WTC11 (cell line): ENCODE measurements at regions of chr21 and their contacts with region 1.

Region 1: GRCh38 chr21:32940079-32941014 is 85.4 kb upstream of the OLIG2 start:
- DNase-seq: peak; percentile 41
- ATAC-seq: peak; percentile 93
- H3K4me3 Mint-ChIP-seq: no peak overlapping the region
- H3K27ac Mint-ChIP-seq: no peak overlapping the region
- H3K4me1 Mint-ChIP-seq: peaks cover 7% of the 10 kb centered on the region
- H3K27me3 Mint-ChIP-seq: peaks cover 4% of the 10 kb centered on the region
- CTCF ChIP-seq: peak; percentile 72

Region 2: GRCh38 chr21:32921632-32922230 is 18.6 kb before region 1 on chr21:
- CTCF ChIA-PET with region 1: interaction called, 15 read pairs
- POLR2A ChIA-PET with region 1: no interaction called
- DNase-seq: peak; percentile 72
- ATAC-seq: peak; percentile 68
- H3K4me3 Mint-ChIP-seq: no peak overlapping the region
- H3K27ac Mint-ChIP-seq: no peak overlapping the region
- H3K4me1 Mint-ChIP-seq: peaks cover 18% of the 10 kb centered on the region
- H3K27me3 Mint-ChIP-seq: peaks cover 3% of the 10 kb centered on the region; the same call in 1 of the 2 replicates
- CTCF ChIP-seq: peak; percentile 46; the same call in 1 of the 2 replicates

Region 3: GRCh38 chr21:32958288-32959002 is 18.1 kb after region 1 on chr21:
- CTCF ChIA-PET with region 1: interaction called, 13 read pairs
- POLR2A ChIA-PET with region 1: no interaction called
- DNase-seq: no peak
- ATAC-seq: peak; percentile 68
- H3K4me3 Mint-ChIP-seq: no peak overlapping the region
- H3K27ac Mint-ChIP-seq: peak overlapping the region; percentile 69; the same call in 1 of the 2 replicates
- H3K4me1 Mint-ChIP-seq: peaks cover 58% of the 10 kb centered on the region
- H3K27me3 Mint-ChIP-seq: no peaks in the 10 kb centered on the region; the same call in none of the 2 replicates
- CTCF ChIP-seq: no peak

Region 4: DNA sequence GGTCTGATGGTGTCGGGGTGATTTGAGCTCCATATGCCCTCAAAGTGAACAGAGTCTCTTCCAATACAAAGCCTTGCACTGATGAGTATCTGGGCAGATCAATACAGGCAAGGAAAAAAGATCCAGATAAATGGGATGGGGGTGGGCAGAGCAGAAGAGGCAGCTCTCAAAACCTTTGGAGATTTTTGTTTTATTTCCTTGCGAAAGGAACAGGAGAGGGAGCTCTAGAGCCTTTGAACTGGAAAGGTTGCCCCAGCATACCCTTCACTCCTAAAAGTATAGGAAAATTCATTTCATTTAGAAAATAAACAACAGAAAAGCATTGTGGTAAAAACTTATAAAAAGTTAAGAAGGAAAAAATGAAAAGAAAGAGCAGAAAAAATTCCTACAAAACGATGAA is 54.0 kb after region 1 on chr21:
- CTCF ChIA-PET with region 1: interaction called, 22 read pairs
- POLR2A ChIA-PET with region 1: no interaction called
- DNase-seq: no peak
- ATAC-seq: peak; percentile 56
- H3K4me3 Mint-ChIP-seq: no peak overlapping the region
- H3K27ac Mint-ChIP-seq: no peak overlapping the region
- H3K4me1 Mint-ChIP-seq: peaks cover 8% of the 10 kb centered on the region
- H3K27me3 Mint-ChIP-seq: no peaks in the 10 kb centered on the region; the same call in 1 of the 2 replicates
- CTCF ChIP-seq: no peak

Region 5: DNA sequence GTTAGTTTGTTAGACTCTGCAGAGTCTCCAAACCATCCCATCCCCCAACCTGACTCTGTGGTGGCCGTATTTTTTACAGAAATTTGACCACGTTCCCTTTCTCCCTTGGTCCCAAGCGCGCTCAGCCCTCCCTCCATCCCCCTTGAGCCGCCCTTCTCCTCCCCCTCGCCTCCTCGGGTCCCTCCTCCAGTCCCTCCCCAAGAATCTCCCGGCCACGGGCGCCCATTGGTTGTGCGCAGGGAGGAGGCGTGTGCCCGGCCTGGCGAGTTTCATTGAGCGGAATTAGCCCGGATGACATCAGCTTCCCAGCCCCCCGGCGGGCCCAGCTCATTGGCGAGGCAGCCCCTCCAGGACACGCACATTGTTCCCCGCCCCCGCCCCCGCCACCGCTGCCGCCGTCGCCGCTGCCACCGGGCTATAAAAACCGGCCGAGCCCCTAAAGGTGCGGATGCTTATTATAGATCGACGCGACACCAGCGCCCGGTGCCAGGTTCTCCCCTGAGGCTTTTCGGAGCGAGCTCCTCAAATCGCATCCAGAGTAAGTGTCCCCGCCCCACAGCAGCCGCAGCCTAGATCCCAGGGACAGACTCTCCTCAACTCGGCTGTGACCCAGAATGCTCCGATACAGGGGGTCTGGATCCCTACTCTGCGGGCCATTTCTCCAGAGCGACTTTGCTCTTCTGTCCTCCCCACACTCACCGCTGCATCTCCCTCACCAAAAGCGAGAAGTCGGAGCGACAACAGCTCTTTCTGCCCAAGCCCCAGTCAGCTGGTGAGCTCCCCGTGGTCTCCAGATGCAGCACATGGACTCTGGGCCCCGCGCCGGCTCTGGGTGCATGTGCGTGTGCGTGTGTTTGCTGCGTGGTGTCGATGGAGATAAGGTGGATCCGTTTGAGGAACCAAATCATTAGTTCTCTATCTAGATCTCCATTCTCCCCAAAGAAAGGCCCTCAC is 85.4 kb after region 1 on chr21 and contains the start of gene OLIG2:
- CTCF ChIA-PET with region 1: interaction called, 23 read pairs
- POLR2A ChIA-PET with region 1: no interaction called
- DNase-seq: peak; percentile 95
- ATAC-seq: peak; percentile 87
- H3K4me3 Mint-ChIP-seq: peak within 1 kb of the TSS; percentile 73
- H3K27ac Mint-ChIP-seq: no peak within 1 kb of the TSS
- H3K4me1 Mint-ChIP-seq: peaks cover 60% of the 10 kb centered on the region
- H3K27me3 Mint-ChIP-seq: peaks cover 100% of the 10 kb centered on the region
- CTCF ChIP-seq: no peak
- total RNA-seq, gene OLIG2: 0.60 to 0.79 TPM (median 0.71 TPM) in 3 replicates

Region 6: DNA sequence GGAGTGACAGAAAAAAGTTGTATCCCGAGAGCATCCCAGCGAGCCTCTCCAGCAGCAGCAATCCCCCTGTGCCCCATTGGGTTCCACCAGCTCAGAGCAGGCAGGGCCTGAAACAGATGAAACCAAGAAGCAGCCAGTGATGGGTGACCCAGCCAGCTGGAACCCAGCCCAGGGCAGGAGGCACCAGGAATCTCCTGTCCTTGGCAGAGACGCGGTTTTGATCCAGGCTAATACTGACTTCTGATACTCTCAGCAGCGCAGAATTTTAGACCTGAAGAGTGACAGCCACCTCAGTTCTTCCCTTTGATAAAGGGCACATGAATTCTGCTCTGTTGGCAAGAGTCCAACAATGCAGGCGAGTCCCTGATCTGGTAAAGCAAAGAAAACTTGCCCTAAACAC is 118.2 kb after region 1 on chr21:
- CTCF ChIA-PET with region 1: no interaction called
- POLR2A ChIA-PET with region 1: no interaction called
- DNase-seq: no peak
- ATAC-seq: no peak
- H3K4me3 Mint-ChIP-seq: no peak overlapping the region
- H3K27ac Mint-ChIP-seq: no peak overlapping the region
- H3K4me1 Mint-ChIP-seq: no peaks in the 10 kb centered on the region
- H3K27me3 Mint-ChIP-seq: peaks cover 37% of the 10 kb centered on the region
- CTCF ChIP-seq: no peak